Sciatic nerve (tissue), 2 donors: ENCODE measurements at regions of chr3 and their contacts with region 1.

Region 1: GRCh38 chr3:179309225-179310078 is 13.4 kb upstream of the ZNF639 start:
- DNase-seq: no peak
- ATAC-seq: no peak

Region 2: GRCh38 chr3:179147873-179148615 is 161.4 kb before region 1 on chr3 and contains the start of gene PIK3CA:
- intact Hi-C with region 1: loop called (anchors 10 kb)
- DNase-seq: peak; percentile 95
- ATAC-seq: peak; percentile 99
- total RNA-seq, gene PIK3CA: 41.0 TPM